Activated CD4-positive, alpha-beta T cell treated with anti-CD3 and anti-CD28 coated beads for 36 hours (primary cell): ENCODE measurements at regions of chr2 and their contacts with region 1.

Region 1: GRCh38 chr2:8514796-8515758 is 166.8 kb upstream of the ID2 start:
- DNase-seq: peak; percentile 82
- ATAC-seq: peak; percentile 86
- H3K4me3 Mint-ChIP-seq: peak overlapping the region; percentile 46
- H3K27ac Mint-ChIP-seq: peak overlapping the region; percentile 93
- H3K4me1 Mint-ChIP-seq: peaks cover 63% of the 10 kb centered on the region
- H3K27me3 Mint-ChIP-seq: no peaks in the 10 kb centered on the region

Region 2: DNA sequence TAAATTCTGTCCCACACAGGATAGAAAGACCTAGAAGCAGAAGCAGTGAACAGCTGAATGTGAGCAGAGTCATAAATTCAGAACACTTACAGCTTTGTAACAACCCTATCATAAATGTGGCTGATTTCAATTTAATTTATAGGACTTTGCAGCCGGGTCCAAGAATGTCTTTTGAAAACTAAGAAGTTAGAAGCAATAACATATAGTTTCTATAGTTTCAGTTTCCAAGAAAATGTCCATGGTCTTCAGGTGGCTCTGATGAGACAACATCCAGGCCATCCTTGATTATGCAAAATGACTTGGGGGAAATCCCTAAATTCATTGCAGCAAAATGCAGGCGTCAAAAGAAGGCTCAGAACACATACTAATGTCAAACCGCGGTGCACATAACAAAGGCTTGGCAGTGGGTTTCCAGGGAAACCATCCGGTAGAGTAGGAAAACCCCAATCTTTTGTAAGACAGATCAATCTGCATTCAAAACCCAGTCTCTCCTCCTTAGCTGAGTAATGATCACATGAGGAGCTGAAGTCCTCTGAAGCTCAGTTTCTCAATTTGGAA is 275.5 kb before region 1 on chr2:
- CTCF ChIA-PET with region 1: no interaction called
- POLR2A ChIA-PET with region 1: no interaction called
- intact Hi-C with region 1: no loop called
- DNase-seq: peak; percentile 72
- ATAC-seq: peak; percentile 91
- H3K4me3 Mint-ChIP-seq: no peak overlapping the region
- H3K27ac Mint-ChIP-seq: no peak overlapping the region
- H3K4me1 Mint-ChIP-seq: peaks cover 22% of the 10 kb centered on the region
- H3K27me3 Mint-ChIP-seq: peaks cover 18% of the 10 kb centered on the region

Region 3: DNA sequence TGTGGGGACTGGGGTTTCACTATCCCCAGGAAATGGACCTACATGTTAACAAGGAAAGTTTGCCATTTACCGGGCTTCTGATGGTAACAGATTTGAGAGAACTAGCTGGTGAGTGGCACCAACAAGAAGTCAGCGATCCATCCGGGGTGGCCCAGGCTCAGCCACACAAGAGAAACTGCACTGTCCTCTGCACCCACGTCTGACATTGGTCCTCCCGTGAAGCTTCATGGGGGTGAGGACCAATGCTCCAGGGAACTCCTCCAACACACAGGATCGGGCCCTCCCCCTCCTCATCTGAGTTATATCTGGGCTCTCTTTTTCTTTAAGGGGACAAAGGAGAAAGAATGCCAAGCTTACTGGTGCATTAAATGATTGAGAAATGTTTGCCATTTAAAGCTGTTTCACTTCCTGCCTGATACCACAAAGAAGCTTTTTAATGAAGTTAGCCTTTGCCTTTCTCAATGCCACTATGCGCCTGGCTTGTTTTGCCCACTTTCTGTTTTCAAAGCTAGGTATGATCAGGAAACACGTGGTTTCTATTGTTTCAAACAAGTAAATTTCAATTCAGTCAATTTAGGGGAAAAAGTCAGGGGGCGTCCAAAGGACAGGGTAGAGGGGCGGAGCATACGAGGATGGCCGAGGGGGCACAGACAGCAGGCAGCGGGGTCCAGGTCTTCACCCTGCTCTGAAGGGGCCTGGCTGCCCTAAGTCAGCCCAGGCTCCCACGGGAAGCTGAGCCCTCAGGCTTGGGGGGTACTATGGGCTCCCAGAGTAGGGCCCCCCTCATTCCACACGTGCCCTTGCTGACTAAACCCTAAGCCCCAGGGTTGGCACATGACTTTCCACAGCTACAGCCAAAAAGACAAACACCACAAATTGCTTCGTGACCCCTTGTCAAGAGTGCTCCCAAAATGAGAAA is 37.3 kb before region 1 on chr2:
- CTCF ChIA-PET with region 1: interaction called, 3 read pairs
- POLR2A ChIA-PET with region 1: interaction called, 6 read pairs
- intact Hi-C with region 1: loop called (anchors 1 to 2 kb)
- DNase-seq: peak; percentile 45
- ATAC-seq: no peak
- H3K4me3 Mint-ChIP-seq: peak overlapping the region; percentile 49
- H3K27ac Mint-ChIP-seq: peak overlapping the region; percentile 89
- H3K4me1 Mint-ChIP-seq: peaks cover 77% of the 10 kb centered on the region
- H3K27me3 Mint-ChIP-seq: no peaks in the 10 kb centered on the region

Region 4: DNA sequence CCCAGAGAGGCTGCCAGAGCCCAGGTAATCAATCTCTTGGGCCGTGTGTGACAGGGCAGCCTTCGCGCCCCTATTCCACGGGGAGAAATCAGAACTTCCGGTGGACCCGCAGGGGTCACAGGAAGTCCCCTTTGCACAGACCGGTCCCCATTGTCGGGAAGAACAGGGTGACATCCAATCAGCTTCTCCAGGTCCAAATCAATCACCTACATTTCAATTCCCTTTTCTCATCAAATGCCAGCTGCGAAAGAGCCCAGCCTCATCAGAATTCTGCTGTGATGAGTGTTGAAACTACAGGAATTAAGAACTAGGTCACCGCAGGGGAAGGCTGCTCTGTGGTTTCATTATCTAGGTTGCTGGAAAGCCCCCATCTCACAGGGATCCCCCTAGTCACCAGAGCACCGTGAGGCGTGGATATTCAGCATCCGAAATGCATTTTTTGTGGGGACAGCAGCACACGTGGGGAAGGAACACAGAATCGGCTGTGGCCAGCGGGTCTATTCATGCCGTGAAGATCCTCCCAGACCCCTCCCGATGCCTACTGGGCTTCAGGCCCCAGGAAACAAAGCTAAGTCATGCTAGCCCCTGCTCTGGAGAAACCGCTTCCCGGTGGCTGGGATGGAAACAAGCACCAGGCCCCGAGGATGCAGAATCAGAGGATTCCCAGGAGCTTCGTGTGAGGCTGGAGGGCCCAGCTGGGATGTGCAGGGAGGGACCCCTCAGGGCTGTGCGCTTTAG is 26.9 kb before region 1 on chr2:
- CTCF ChIA-PET with region 1: interaction called, 3 read pairs
- POLR2A ChIA-PET with region 1: interaction called, 5 read pairs
- intact Hi-C with region 1: loop called (anchors 1 kb)
- DNase-seq: peak; percentile 80
- ATAC-seq: peak; percentile 85
- H3K4me3 Mint-ChIP-seq: peak overlapping the region; percentile 72
- H3K27ac Mint-ChIP-seq: peak overlapping the region; percentile 86
- H3K4me1 Mint-ChIP-seq: peaks cover 49% of the 10 kb centered on the region
- H3K27me3 Mint-ChIP-seq: no peaks in the 10 kb centered on the region

Region 5: DNA sequence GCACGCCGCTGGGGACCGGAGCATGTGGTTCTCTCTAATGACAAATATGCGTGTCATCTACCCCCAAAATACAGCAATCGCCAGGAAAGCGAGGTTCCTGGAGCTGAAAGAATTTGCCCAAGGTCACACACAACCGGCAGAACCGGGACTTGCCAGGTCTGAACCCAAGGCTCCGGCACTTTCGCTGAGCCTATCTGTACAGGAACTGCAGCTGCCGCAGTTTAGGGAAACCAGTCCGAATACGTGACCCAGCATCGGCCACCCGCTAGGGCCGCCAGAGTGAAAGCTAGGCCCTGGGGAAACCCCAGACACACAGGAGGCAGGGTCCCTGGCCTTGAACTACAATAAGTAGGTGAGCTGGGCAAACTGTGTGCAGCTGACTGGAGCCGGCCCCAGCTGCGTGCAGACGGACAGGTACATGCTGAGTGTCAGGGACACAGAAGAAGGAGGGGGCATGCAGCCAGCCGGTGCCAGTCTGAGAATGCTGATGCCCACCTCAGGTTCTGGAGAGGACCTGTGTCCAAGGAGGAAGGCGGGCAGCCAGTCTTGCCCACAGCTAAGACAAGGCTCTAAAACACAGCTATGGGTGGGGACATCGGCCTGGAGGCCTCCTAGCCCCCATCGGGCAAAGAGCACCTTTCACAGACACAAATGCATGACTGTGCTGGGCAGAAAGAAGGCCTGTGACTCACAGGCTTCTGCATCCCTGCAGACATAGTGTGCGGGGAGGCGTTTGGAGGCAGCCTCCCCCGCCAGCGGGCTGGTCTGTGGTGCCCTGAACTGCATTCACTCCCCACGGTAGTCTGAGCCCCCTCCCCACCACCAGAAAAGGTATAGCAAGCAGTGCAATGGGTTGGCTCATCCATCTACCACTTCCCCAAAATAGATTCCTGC is 59.3 kb after region 1 on chr2:
- CTCF ChIA-PET with region 1: no interaction called
- POLR2A ChIA-PET with region 1: interaction called, 3 read pairs
- intact Hi-C with region 1: loop called in 1 of 2 experiments (anchors 2 kb)
- DNase-seq: peak; percentile 23
- ATAC-seq: peak; percentile 30
- H3K4me3 Mint-ChIP-seq: peak overlapping the region; percentile 43
- H3K27ac Mint-ChIP-seq: no peak overlapping the region
- H3K4me1 Mint-ChIP-seq: peaks cover 40% of the 10 kb centered on the region
- H3K27me3 Mint-ChIP-seq: peaks cover 4% of the 10 kb centered on the region

Region 6: GRCh38 chr2:8583400-8584173 is 68.5 kb after region 1 on chr2:
- CTCF ChIA-PET with region 1: interaction called, 3 read pairs
- POLR2A ChIA-PET with region 1: interaction called, 3 read pairs
- intact Hi-C with region 1: loop called in 1 of 2 experiments (anchors 2 kb)
- DNase-seq: peak; percentile 91
- ATAC-seq: peak; percentile 69
- H3K4me3 Mint-ChIP-seq: peak overlapping the region; percentile 24
- H3K27ac Mint-ChIP-seq: no peak overlapping the region
- H3K4me1 Mint-ChIP-seq: peaks cover 56% of the 10 kb centered on the region
- H3K27me3 Mint-ChIP-seq: peaks cover 5% of the 10 kb centered on the region

Region 7: DNA sequence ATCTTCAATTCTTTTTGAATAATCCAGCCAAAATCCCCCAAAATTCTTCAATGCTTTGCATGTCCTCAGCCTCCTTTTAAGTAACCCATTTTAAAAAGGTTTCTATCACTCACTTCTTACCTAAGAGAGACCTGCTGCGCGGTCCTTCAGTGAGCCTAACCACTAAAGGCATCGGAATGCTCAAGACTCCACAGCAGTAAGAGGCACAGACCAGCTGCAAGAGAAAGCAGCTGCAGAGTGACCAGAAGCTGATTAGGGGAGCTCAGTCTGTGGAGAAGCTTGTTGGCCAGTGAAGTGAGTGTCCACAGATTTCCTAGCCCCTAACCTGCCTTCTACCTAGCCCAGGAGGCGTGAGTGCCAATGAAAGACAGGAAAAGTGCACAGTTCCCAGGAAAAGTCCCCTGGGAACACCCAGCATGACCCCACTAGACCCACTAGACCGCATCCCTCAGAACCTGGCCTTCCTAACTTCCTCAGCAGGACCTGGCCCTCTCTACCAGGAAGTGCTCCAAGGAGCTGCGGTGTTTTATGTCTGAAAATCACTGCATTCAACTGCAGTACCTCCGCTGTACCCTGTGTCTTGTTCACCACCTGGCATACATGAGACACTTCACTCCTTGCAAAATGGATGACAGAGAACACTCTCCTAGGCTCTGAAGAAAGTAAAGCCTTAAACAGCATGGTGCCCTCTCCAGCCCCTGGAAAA is 478.3 kb after region 1 on chr2:
- CTCF ChIA-PET with region 1: no interaction called
- POLR2A ChIA-PET with region 1: no interaction called
- intact Hi-C with region 1: no loop called
- DNase-seq: no peak
- ATAC-seq: no peak
- H3K4me3 Mint-ChIP-seq: no peak overlapping the region
- H3K27ac Mint-ChIP-seq: no peak overlapping the region
- H3K4me1 Mint-ChIP-seq: no peaks in the 10 kb centered on the region
- H3K27me3 Mint-ChIP-seq: peaks cover 5% of the 10 kb centered on the region